Heart right ventricle (tissue), 16 donors: ENCODE measurements at regions of chr12 and their contacts with region 1.

Region 1: DNA sequence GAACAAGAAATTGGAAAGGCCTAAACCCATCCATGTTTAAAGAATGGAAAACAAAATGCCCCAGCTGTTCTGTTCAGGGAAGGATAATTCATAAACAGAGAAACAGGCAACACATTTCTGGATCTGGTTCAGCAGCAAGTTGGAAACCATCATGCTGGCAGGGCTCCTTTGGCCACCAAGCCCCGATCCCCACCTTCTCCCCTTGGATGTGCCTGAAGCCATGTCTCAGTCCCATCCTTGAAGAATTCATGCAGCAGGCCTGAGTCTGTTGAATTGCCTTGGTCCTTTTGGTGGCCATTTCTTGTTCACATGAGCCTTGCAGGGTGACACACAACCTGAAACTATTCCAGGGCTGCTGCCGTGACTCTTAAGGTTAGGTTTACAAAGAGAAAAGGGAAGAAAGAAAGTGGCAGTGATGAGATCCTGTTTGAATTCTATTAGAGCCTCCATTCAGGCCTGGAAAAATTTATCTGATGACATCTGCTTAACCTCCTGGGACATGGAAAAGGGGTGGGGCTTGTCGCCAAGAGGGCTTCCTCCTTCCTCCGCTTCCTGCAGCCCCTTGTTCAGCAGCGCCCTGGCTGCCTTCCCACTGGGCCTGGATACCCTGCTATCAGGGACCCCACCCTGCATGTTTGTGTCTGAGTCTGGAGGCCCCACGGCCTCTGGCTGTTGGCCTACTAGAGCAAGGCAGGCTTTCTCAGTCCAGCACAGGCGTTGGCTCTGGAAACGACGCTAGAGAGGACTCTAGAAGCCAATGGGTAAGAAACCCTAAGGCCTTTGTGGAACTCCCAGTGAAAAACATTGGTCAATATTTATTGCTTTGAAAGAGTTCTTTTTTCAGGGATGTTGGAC is 341.9 kb downstream of the C12orf75 start:
- DNase-seq: peak; percentile 84 to 86
- ATAC-seq: peak; percentile 77 to 94 (median 90)
- H3K4me3 ChIP-seq: no peak overlapping the region
- H3K27ac ChIP-seq: peak overlapping the region; percentile 32 to 86 (median 64)
- H3K4me1 ChIP-seq: peaks cover 4 to 59% (median 30%) of the 10 kb centered on the region in 9 donors
- H3K27me3 ChIP-seq: no peaks in the 10 kb centered on the region
- CTCF ChIP-seq: no peak

Region 2: DNA sequence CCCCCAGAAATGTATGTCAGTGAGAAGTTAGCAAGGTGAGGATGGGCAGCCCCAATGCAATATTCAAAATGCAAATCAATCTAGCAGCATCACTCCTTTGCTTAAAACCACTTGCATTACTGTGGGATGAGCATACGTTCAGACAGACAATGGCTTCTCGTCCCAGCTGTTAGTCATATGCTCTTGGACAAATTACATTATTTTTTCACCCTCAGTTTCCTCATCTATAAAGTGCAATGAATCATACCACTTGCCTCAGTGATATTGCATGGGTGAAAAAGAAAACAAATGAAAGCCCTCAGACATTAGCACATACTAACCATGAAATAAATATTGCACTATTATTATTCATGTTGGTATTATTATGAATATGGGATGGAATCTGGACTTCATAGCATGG is 209.5 kb before region 1 on chr12:
- intact Hi-C with region 1: loop called in 2 of 10 experiments (anchors 10 kb)
- DNase-seq: no peak
- ATAC-seq: no peak
- H3K4me3 ChIP-seq: no peak overlapping the region
- H3K27ac ChIP-seq: no peak overlapping the region
- H3K4me1 ChIP-seq: peaks cover 4 to 43% (median 18%) of the 10 kb centered on the region in 9 donors
- H3K27me3 ChIP-seq: no peaks in the 10 kb centered on the region
- CTCF ChIP-seq: no peak

Region 3: DNA sequence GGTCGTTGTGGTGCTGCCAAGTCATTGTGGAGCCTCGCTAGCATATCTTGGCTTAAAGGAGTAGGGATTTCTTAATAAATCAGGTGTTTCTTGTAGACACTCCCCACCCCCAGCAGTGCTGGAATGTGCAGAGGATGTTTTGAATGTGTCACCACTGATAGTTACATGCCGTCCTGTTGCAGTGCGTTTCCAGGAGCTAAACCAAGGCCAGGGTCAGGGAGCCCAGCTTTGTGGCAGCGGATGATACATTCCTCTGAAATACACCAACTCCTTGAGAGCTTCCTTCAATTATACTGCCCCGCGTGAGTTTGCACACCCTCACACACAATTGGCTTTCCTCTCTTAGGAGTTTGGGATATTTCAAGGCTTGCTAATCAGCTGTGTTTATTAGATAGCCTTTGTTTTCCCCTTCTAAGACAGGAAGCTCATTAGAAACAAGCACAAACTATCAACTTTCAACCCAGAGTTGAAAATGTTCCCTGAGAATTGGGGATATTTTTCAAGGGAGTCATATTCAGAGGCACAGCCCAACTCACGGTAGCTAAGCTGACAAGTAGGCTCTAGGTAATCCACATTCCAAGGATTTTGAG is 186.9 kb before region 1 on chr12:
- intact Hi-C with region 1: loop called in 2 of 10 experiments (anchors 2 to 10 kb)
- DNase-seq: peak; percentile 25 to 37
- ATAC-seq: peak; percentile 43 to 95 (median 87)
- H3K4me3 ChIP-seq: no peak overlapping the region
- H3K27ac ChIP-seq: peak overlapping the region in 7 of 10 donors; percentile 9 to 65 (median 45)
- H3K4me1 ChIP-seq: peaks cover 0 to 32% (median 16%) of the 10 kb centered on the region in 9 donors
- H3K27me3 ChIP-seq: no peaks in the 10 kb centered on the region
- CTCF ChIP-seq: no peak

Region 4: GRCh38 chr12:105600911-105601545 is 71.3 kb before region 1 on chr12:
- intact Hi-C with region 1: no loop called
- DNase-seq: no peak
- ATAC-seq: no peak
- H3K4me3 ChIP-seq: no peak overlapping the region
- H3K27ac ChIP-seq: no peak overlapping the region
- H3K4me1 ChIP-seq: peaks cover 0 to under 1% (median 0%) of the 10 kb centered on the region in 9 donors
- H3K27me3 ChIP-seq: no peaks in the 10 kb centered on the region
- CTCF ChIP-seq: no peak

Region 5: DNA sequence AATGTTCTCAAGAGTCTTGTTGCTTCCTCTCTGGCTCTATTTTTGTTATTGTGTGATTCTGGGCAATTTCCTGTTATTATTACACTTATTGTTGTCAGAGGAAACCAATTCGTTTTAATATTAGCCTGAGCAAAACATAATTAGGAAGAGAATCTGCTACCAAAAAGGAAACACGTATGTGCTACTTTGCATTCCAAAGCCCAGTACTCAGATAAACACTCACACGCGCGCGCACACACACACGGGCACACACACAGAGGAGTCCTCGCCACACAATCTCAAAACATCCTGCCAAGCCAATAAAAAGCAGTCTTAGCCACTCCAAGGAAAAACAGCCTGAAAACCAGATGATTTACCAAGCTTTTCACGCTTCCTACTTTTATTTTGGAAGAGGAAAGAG is 65.7 kb after region 1 on chr12:
- intact Hi-C with region 1: loop called in 2 of 10 experiments (anchors 5 kb)
- DNase-seq: peak; percentile 53 to 55
- ATAC-seq: peak; percentile 55 to 83 (median 75)
- H3K4me3 ChIP-seq: peak overlapping the region in 2 of 10 donors; percentile 4 to 15
- H3K27ac ChIP-seq: peak overlapping the region; percentile 39 to 87 (median 78)
- H3K4me1 ChIP-seq: peaks cover 21 to 76% (median 59%) of the 10 kb centered on the region in 9 donors
- H3K27me3 ChIP-seq: no peaks in the 10 kb centered on the region
- CTCF ChIP-seq: no peak